Endothelial cell of umbilical vein (primary cell): ENCODE measurements at regions of chr5 and their contacts with region 1.

Region 1: DNA sequence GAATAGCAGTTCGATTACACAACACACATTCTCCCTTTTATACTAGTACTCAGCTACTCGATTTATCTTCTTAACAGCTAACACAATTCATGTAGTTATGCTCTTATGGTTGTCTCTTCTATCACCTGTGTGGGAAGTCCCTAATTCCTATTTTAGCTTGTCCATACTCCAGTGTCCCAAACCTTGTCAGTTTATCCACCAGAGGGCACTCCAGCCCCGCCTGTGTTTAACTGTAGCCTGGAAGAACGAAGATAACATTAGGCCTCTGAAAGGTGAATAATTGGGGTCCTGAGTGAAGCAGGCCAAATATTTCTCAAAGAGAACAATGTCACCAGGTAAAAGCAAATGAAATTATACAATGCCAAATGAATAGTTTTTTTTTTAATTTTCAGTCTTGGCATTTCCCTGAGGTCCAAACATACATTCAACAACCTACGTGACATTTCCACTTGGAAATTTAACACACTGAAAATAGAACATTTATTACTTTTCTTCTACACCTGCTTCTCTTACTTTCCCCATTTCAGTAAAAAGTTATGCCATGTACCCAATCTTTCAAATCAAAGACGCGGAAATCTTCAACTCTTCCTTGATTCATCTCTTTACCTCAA is 560.7 kb downstream of the HTR1A start:
- DNase-seq: peak; percentile 44
- H3K4me3 ChIP-seq: no peak overlapping the region
- H3K27ac ChIP-seq: no peak overlapping the region
- H3K4me1 ChIP-seq: no peaks in the 10 kb centered on the region
- H3K27me3 ChIP-seq: no peaks in the 10 kb centered on the region
- CTCF ChIP-seq: peak; percentile 62 to 63
- POLR2A ChIP-seq: no peak

Region 2: DNA sequence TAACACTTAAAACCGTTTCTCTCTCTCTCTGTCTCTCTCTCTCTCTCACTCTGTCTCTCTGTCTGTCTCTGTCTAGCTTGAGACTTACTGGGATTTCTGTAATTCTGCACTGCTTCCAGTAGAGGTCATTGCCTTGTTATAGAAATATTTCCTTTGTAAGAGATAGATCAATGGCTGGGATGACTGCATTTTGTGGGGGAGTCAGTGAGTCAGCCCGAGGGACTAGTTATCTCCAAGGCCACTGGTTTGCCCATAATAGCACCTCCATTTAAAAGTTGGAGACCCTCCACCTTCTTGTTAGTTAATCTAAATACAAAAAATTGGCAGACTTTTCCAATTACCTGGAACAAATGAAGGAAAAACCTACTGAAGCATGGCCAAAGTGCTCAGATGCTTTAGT is 275.7 kb before region 1 on chr5:
- CTCF ChIA-PET with region 1: interaction called, 6 read pairs
- POLR2A ChIA-PET with region 1: no interaction called
- dilution Hi-C with region 1: no loop called
- intact Hi-C with region 1: loop called (anchors 2 kb)
- DNase-seq: peak; percentile 26
- H3K4me3 ChIP-seq: no peak overlapping the region
- H3K27ac ChIP-seq: no peak overlapping the region
- H3K4me1 ChIP-seq: no peaks in the 10 kb centered on the region
- H3K27me3 ChIP-seq: no peaks in the 10 kb centered on the region
- CTCF ChIP-seq: peak; percentile 24 to 40
- POLR2A ChIP-seq: no peak

Region 3: GRCh38 chr5:64207978-64208377 is 806.4 kb after region 1 on chr5:
- CTCF ChIA-PET with region 1: interaction called, 6 read pairs
- POLR2A ChIA-PET with region 1: no interaction called
- dilution Hi-C with region 1: no loop called
- intact Hi-C with region 1: loop called (anchors 5 kb)
- DNase-seq: peak; percentile 40
- H3K4me3 ChIP-seq: no peak overlapping the region
- H3K27ac ChIP-seq: no peak overlapping the region
- H3K4me1 ChIP-seq: peaks cover 16% of the 10 kb centered on the region
- H3K27me3 ChIP-seq: no peaks in the 10 kb centered on the region
- CTCF ChIP-seq: no peak
- POLR2A ChIP-seq: no peak